Sigmoid colon (tissue), 7 donors: ENCODE measurements at regions of chr17 and their contacts with region 1.

Region 1: GRCh38 chr17:55238179-55238930 is 26.4 kb upstream of the HLF start:
- DNase-seq: peak; percentile 97
- H3K4me3 ChIP-seq: peak overlapping the region; percentile 31 to 55 (median 52)
- H3K27ac ChIP-seq: peak overlapping the region; percentile 82 to 86 (median 85)
- H3K4me1 ChIP-seq: peaks cover 0 to 22% (median 9%) of the 10 kb centered on the region in 4 donors
- H3K27me3 ChIP-seq: no peaks in the 10 kb centered on the region
- CTCF ChIP-seq: no peak
- EP300 ChIP-seq: peak in 1 of 4 donors; percentile 35
- POLR2A ChIP-seq: no peak

Region 2: GRCh38 chr17:54992797-54993639 is 245.3 kb before region 1 on chr17:
- intact Hi-C with region 1: loop called (anchors 10 kb)
- DNase-seq: no peak
- H3K4me3 ChIP-seq: no peak overlapping the region
- H3K27ac ChIP-seq: no peak overlapping the region
- H3K4me1 ChIP-seq: no peaks in the 10 kb centered on the region
- H3K27me3 ChIP-seq: no peaks in the 10 kb centered on the region
- CTCF ChIP-seq: peak in 3 of 4 experiments; percentile 47 to 67 (median 56)
- EP300 ChIP-seq: no peak
- POLR2A ChIP-seq: no peak

Region 3: DNA sequence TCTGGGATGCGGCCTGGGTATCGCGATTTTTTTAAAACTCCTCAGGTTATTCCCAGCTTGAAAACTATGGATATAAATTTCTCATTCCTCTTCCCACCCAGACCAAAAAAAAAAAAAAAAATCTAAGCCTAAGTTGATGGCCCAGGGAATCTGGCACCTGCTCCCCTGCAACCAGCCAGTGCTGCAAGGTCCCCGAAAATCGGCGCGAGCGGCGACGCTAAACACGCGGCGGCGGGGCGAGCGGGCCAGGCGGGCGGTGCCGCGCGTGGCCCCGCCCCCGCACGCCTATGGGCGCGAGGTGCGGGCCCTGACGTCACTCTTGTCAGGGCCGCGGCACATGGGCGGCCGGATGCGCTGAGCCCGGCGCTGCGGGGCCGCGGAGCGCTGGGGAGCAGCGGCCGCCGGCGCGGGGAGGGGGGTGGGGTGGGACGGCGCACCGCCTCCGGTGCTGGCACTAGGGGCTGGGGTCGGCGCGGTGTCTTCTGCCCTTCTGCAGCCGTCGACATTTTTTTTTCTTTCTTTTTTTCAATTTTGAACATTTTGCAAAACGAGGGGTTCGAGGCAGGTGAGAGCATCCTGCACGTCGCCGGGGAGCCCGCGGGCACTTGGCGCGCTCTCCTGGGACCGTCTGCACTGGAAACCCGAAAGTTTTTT is 26.4 kb after region 1 on chr17 and contains the start of gene HLF:
- intact Hi-C with region 1: loop called (anchors 1 kb)
- DNase-seq: peak; percentile 93
- H3K4me3 ChIP-seq: peak within 1 kb of the TSS; percentile 70 to 81 (median 74)
- H3K27ac ChIP-seq: peak within 1 kb of the TSS; percentile 88 to 97 (median 95)
- H3K4me1 ChIP-seq: peaks cover 0 to 50% (median 35%) of the 10 kb centered on the region in 4 donors
- H3K27me3 ChIP-seq: no peaks in the 10 kb centered on the region
- CTCF ChIP-seq: no peak
- EP300 ChIP-seq: no peak
- POLR2A ChIP-seq: no peak
- total RNA-seq, gene HLF: 41.7 to 54.0 (median 49.4) TPM